ENCODE measurements at regions of chr6 and their contacts with region 1.

Region 1: GRCh38 chr6:16964553-16965501 is 137.0 kb upstream of the STMND1 start:
- DNase-seq: peak; percentile 75
- H3K4me3 Mint-ChIP-seq: no peak overlapping the region
- H3K27ac Mint-ChIP-seq: peak overlapping the region; percentile 3
- H3K4me1 Mint-ChIP-seq: peaks cover 5% of the 10 kb centered on the region
- H3K27me3 Mint-ChIP-seq: peaks cover 6% of the 10 kb centered on the region
- CTCF ChIP-seq: peak; percentile 87

Region 2: GRCh38 chr6:16514249-16514648 is 450.6 kb before region 1 on chr6:
- CTCF ChIA-PET with region 1: interaction called, 11 read pairs
- POLR2A ChIA-PET with region 1: no interaction called
- intact Hi-C with region 1: loop called (anchors 5 kb)
- DNase-seq: peak; percentile 29
- H3K4me3 Mint-ChIP-seq: no peak overlapping the region
- H3K27ac Mint-ChIP-seq: no peak overlapping the region
- H3K4me1 Mint-ChIP-seq: peaks cover 10% of the 10 kb centered on the region
- H3K27me3 Mint-ChIP-seq: no peaks in the 10 kb centered on the region
- CTCF ChIP-seq: peak; percentile 20

Region 3: GRCh38 chr6:16770701-16771569 is 193.9 kb before region 1 on chr6:
- CTCF ChIA-PET with region 1: interaction called, 12 read pairs
- POLR2A ChIA-PET with region 1: no interaction called
- intact Hi-C with region 1: loop called (anchors 1 kb)
- DNase-seq: peak; percentile 77
- H3K4me3 Mint-ChIP-seq: no peak overlapping the region
- H3K27ac Mint-ChIP-seq: no peak overlapping the region
- H3K4me1 Mint-ChIP-seq: peaks cover 29% of the 10 kb centered on the region
- H3K27me3 Mint-ChIP-seq: no peaks in the 10 kb centered on the region
- CTCF ChIP-seq: peak; percentile 81

Region 4: DNA sequence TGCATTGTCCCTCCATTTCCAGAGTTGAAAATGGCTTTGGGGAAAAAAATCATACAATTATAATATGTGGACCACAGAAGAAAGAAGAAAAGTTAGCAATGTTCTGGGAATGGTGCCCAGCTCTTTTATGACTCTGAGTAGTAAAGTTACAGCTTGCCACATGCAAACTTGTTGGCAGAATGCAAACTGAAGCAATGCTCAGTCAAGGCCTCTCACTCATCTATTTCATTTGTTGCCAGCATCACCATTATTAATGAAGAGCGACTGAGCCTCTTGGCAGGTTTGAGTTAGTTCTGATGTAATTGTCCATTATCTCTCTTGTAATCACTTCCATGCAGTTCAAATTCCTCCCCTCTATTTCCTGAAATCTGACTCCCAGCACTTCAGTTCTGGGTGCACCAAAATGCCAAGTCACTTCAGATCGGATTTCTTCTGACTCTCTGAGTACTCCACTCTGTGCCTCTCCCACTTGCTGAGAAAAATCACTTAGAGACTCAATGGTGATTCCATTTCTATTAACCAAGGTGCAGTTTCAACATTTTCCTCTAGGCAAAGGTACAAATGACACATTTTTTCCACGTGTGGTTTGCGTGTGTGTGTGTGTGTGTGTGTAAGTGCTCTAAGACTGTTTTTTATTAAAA is 17.3 kb before region 1 on chr6:
- CTCF ChIA-PET with region 1: interaction called, 13 read pairs
- POLR2A ChIA-PET with region 1: interaction called, 4 read pairs
- intact Hi-C with region 1: no loop called
- DNase-seq: peak; percentile 88
- H3K4me3 Mint-ChIP-seq: peak overlapping the region; percentile 12
- H3K27ac Mint-ChIP-seq: peak overlapping the region; percentile 73
- H3K4me1 Mint-ChIP-seq: peaks cover 24% of the 10 kb centered on the region
- H3K27me3 Mint-ChIP-seq: no peaks in the 10 kb centered on the region
- CTCF ChIP-seq: no peak

Region 5: GRCh38 chr6:16979677-16980370 is 15.0 kb after region 1 on chr6:
- CTCF ChIA-PET with region 1: interaction called, 12 read pairs
- POLR2A ChIA-PET with region 1: no interaction called
- intact Hi-C with region 1: no loop called
- DNase-seq: no peak
- H3K4me3 Mint-ChIP-seq: no peak overlapping the region
- H3K27ac Mint-ChIP-seq: no peak overlapping the region
- H3K4me1 Mint-ChIP-seq: no peaks in the 10 kb centered on the region
- H3K27me3 Mint-ChIP-seq: peaks cover 58% of the 10 kb centered on the region
- CTCF ChIP-seq: no peak

Region 6: GRCh38 chr6:17086469-17086868 is 121.6 kb after region 1 on chr6:
- CTCF ChIA-PET with region 1: interaction called, 7 read pairs
- POLR2A ChIA-PET with region 1: no interaction called
- intact Hi-C with region 1: loop called (anchors 10 kb)
- DNase-seq: peak; percentile 76
- H3K4me3 Mint-ChIP-seq: no peak overlapping the region
- H3K27ac Mint-ChIP-seq: no peak overlapping the region
- H3K4me1 Mint-ChIP-seq: no peaks in the 10 kb centered on the region
- H3K27me3 Mint-ChIP-seq: no peaks in the 10 kb centered on the region
- CTCF ChIP-seq: peak; percentile 57

Measured in MCF 10A (cell line).